PC-9 (cell line): ENCODE measurements at regions of chr16 and their contacts with region 1.

Region 1: GRCh38 chr16:29700253-29700987 is 21.4 kb downstream of the QPRT start:
- DNase-seq: peak; percentile 83 to 90
- H3K4me3 ChIP-seq: no peak overlapping the region
- H3K27ac ChIP-seq: no peak overlapping the region
- H3K4me1 ChIP-seq: peaks cover 7% of the 10 kb centered on the region; the same call in 1 of the 2 replicates
- H3K27me3 ChIP-seq: no peaks in the 10 kb centered on the region
- CTCF ChIP-seq: peak; percentile 96

Region 2: DNA sequence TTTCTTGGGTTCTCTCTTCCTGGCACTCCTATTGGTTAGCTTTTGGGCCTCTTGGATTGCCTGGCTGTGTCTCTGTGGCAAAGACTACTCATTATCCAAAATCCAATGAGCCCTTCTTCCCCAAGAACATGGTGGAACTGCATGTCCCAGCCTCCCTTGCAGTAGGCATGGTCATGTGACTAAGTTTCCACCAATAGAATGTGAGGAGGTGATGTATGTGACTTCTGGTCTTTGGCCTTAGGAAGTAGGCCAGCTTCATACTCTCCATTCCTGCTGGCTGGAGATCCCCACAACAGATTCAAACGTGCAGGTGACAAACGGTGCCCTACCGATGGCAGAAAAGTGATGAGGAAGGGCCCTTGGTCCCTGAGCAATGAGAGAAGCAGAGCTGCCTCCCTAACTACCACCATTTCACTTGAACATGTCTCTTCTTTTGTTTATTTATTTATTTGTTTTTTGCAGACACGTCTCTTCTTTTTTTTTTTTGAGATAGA is 54.7 kb before region 1 on chr16:
- CTCF ChIA-PET with region 1: no interaction called
- POLR2A ChIA-PET with region 1: no interaction called
- intact Hi-C with region 1: loop called (anchors 10 kb)
- DNase-seq: no peak
- H3K4me3 ChIP-seq: no peak overlapping the region
- H3K27ac ChIP-seq: no peak overlapping the region
- H3K4me1 ChIP-seq: no peaks in the 10 kb centered on the region
- H3K27me3 ChIP-seq: no peaks in the 10 kb centered on the region
- CTCF ChIP-seq: no peak

Region 3: DNA sequence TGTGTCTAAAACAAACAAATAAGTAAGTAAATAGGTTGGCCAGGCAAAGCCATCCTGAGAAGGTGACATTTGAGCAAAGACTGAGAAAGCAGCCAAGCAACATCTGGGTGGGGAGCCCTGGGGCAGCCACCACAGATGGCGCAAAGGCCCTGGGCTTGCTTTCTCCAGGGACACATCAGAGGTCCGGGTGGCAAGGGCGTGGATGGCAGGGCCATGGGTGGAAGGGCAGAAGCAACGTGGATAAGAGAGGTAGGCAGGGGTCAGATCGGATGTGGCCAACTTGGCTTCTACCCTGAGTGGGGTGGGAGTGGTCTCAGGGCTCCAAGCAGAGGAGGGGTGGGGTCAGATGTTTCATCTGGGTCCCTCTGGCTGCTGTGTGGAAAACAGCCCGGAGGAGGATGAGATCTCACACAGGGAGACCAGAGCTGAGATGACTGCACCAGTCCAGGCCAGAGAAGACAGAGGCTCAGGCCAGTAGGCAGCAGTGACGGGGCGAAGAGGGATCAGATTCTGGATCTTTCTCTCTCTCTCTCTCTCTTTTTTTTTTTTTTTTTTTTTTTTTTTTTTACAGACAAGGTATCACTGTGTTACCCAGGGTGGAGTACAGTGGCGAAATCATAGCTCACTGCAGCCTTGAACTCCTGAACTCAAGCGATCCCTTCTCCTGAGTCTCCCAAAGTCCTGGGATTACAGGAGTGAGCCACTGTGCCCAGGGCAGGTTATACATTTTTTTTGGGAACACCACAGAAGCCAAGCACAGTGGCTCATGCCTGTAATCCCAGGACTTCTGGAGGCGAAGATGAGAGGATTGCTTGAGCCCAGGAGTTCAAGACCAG is 43.5 kb before region 1 on chr16:
- CTCF ChIA-PET with region 1: no interaction called
- POLR2A ChIA-PET with region 1: no interaction called
- intact Hi-C with region 1: no loop called
- DNase-seq: no peak
- H3K4me3 ChIP-seq: no peak overlapping the region
- H3K27ac ChIP-seq: no peak overlapping the region
- H3K4me1 ChIP-seq: no peaks in the 10 kb centered on the region
- H3K27me3 ChIP-seq: no peaks in the 10 kb centered on the region
- CTCF ChIP-seq: no peak

Region 4: GRCh38 chr16:29710227-29711219 is 10.1 kb after region 1 on chr16:
- CTCF ChIA-PET with region 1: interaction called, 10 read pairs
- POLR2A ChIA-PET with region 1: interaction called, 4 read pairs
- intact Hi-C with region 1: no loop called
- DNase-seq: peak; percentile 44 to 59
- H3K4me3 ChIP-seq: no peak overlapping the region; the same call in 1 of the 2 replicates
- H3K27ac ChIP-seq: no peak overlapping the region
- H3K4me1 ChIP-seq: no peaks in the 10 kb centered on the region
- H3K27me3 ChIP-seq: no peaks in the 10 kb centered on the region
- CTCF ChIP-seq: peak; percentile 74

Region 5: GRCh38 chr16:29745853-29746345 is 45.5 kb after region 1 on chr16 and contains the start of gene C16orf54:
- CTCF ChIA-PET with region 1: no interaction called
- POLR2A ChIA-PET with region 1: no interaction called
- intact Hi-C with region 1: no loop called
- DNase-seq: no peak
- H3K4me3 ChIP-seq: no peak within 1 kb of the TSS
- H3K27ac ChIP-seq: no peak within 1 kb of the TSS
- H3K4me1 ChIP-seq: no peaks in the 10 kb centered on the region
- H3K27me3 ChIP-seq: no peaks in the 10 kb centered on the region
- CTCF ChIP-seq: no peak
- total RNA-seq, gene C16orf54: not detected in 2 replicates

Region 6: DNA sequence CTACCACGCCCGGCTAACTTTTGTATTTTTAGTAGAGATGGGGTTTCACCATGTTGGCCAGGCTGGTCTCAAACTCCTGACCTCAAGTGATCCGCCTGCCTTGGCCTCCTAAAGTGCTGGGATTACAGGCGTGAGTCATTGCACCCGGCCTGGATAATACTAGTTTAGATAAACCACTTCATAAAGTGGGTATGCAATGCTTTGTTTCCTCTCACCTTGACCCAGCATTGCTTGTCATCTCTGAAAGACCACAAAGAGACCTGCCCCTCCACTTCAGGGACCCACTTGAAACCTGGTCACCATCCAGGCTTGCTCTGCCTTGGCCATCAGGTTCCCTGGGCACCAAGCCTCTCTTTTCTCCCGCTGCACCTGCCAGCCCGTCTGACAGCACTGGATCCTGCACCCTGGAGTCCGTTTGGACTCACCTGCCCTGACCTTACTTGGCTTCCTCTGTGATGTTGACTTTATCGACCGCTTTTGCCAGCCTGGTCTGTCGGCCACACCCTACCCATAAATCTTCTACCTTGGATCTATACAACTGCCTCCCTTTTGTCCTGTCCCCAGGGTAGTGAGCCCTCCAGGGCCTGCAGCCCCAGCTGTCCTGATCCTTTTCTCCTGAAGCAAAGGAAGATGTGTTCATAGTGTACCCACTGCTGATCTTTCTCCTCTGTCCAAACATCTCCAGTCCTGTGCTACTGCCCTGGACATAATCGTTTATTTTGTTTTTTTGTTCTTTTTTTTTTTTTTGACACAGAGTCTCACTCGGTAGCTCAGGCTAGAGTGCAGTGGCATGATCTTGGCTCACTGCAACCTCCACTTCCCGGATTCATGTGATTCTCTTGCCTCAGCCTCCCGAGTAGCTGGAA is 65.0 kb after region 1 on chr16:
- CTCF ChIA-PET with region 1: no interaction called
- POLR2A ChIA-PET with region 1: no interaction called
- intact Hi-C with region 1: no loop called
- DNase-seq: peak; percentile 67 to 92
- H3K4me3 ChIP-seq: no peak overlapping the region
- H3K27ac ChIP-seq: peak overlapping the region; percentile 47
- H3K4me1 ChIP-seq: peaks cover 27% of the 10 kb centered on the region
- H3K27me3 ChIP-seq: no peaks in the 10 kb centered on the region
- CTCF ChIP-seq: no peak

Region 7: DNA sequence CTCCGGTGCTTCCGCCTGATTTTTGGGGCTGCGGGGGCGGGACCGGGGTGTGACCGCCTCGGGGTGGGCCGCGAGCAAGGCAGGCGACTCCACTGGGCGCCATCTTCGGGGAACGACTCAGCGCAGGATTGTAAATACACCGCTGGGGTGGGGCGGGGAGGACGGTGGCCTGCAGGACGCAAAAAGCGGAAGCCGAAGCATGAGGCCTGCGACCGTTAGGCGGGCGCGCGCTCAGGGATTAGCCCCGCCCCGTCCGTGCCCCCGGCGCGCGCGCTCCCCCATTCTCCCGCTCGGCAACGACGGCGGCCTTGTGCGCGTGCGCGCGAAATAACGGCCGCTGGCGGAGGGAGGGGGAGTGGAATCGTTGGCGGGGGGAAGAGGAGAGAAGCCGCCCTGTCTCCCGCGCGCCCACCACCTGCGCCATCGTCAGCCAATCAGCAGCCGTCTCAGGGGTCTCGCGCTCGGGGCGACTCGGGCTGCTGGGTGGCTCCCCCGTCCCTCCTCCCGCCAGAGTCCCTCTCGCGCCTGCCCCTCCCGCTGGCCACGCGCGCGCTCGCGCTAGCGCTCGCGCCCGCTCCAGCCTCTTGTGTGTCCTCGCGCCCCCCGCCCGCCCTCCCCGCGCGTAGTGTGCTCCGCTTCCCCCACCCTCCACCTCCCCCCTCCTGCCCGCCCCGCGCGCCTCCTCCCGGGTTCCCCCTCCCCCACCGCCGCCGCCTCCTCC is 105.1 kb after region 1 on chr16:
- CTCF ChIA-PET with region 1: interaction called, 5 read pairs
- POLR2A ChIA-PET with region 1: interaction called, 20 read pairs
- intact Hi-C with region 1: loop called (anchors 1 kb)
- DNase-seq: peak; percentile 94 to 99
- H3K4me3 ChIP-seq: peak overlapping the region; percentile 76
- H3K27ac ChIP-seq: peak overlapping the region; percentile 68
- H3K4me1 ChIP-seq: peaks cover 29% of the 10 kb centered on the region
- H3K27me3 ChIP-seq: no peaks in the 10 kb centered on the region
- CTCF ChIP-seq: no peak

Region 8: DNA sequence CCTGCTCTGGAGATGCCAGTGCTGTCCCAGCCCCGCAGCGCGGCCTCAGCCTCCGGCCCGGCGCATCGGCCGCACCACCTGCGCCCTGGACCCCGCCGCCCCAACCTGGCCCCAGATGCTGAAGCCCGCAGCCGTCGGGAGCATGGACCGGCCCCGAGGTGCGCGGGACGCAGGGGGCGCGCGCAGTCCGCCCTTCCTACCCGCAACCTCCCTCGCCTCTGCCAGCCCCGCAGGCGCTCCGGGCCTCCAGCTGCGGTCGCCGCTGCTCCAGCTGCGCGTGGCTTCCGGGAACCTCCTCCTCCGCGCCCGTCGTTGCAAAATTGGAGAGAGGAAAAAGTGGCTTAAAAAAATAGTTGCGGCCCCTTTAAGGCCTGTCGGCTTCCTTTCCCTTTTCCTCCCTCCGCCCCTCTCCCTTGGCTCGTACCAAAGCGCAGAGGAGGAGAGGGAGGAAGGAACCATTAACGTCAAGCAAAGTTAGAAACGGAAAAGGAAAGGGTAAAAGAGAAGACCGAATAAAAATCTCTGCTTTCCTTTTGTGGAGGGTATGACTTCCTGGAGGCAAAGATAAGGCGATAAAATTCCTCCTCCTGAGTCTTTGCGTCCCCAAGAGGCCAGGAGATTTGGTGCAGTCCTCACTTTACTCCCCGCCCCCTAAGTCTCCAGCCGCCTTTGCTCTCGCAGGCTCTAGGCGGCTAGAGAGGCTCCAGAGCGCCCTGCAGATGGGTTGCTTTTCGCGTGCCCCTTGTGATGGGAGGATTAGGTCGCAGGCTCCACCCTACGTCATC is 162.7 kb after region 1 on chr16 and contains the start of gene CDIPT:
- CTCF ChIA-PET with region 1: no interaction called
- POLR2A ChIA-PET with region 1: no interaction called
- intact Hi-C with region 1: loop called (anchors 2 kb)
- DNase-seq: peak; percentile 93 to 97
- H3K4me3 ChIP-seq: peak within 1 kb of the TSS; percentile 78
- H3K27ac ChIP-seq: peak within 1 kb of the TSS; percentile 81
- H3K4me1 ChIP-seq: peaks cover 10% of the 10 kb centered on the region
- H3K27me3 ChIP-seq: no peaks in the 10 kb centered on the region
- CTCF ChIP-seq: 0 out of 2 replicates have a peak, but pooled peaks have one; percentile 35
- total RNA-seq, gene CDIPT: 90.6 and 133 TPM in 2 replicates

Region 9: GRCh38 chr16:30018731-30019158 is 318.3 kb after region 1 on chr16:
- CTCF ChIA-PET with region 1: interaction called, 14 read pairs
- POLR2A ChIA-PET with region 1: no interaction called
- intact Hi-C with region 1: loop called (anchors 1 kb)
- DNase-seq: peak in 1 of 2 experiments; percentile 89
- H3K4me3 ChIP-seq: no peak overlapping the region
- H3K27ac ChIP-seq: no peak overlapping the region
- H3K4me1 ChIP-seq: no peaks in the 10 kb centered on the region; the same call in 1 of the 2 replicates
- H3K27me3 ChIP-seq: peaks cover 8% of the 10 kb centered on the region; the same call in 1 of the 2 replicates
- CTCF ChIP-seq: no peak